A673 (cell line): ENCODE measurements at regions of chr17 and their contacts with region 1.

Region 1: GRCh38 chr17:81860756-81861518 is 602 bp upstream of the P4HB start:
- DNase-seq: peak; percentile 100
- H3K4me3 ChIP-seq: peak overlapping the region; percentile 90
- H3K27ac ChIP-seq: peak overlapping the region; percentile 89
- H3K4me1 ChIP-seq: peaks cover 20% of the 10 kb centered on the region
- H3K27me3 ChIP-seq: no peaks in the 10 kb centered on the region
- CTCF ChIP-seq: no peak

Region 2: GRCh38 chr17:81253358-81254131 is 607.4 kb before region 1 on chr17:
- CTCF ChIA-PET with region 1: no interaction called
- POLR2A ChIA-PET with region 1: interaction called, 11 read pairs
- intact Hi-C with region 1: no loop called
- DNase-seq: peak; percentile 59
- H3K4me3 ChIP-seq: no peak overlapping the region
- H3K27ac ChIP-seq: no peak overlapping the region
- H3K4me1 ChIP-seq: peaks cover 29% of the 10 kb centered on the region
- H3K27me3 ChIP-seq: no peaks in the 10 kb centered on the region
- CTCF ChIP-seq: peak; percentile 82